ENCODE measurements at regions of chr12 and their contacts with region 1.

Region 1: GRCh38 chr12:48851883-48852733 is at the start of gene DDX23:
- DNase-seq: peak; percentile 89 to 96 (median 92)
- H3K4me3 ChIP-seq: peak within 1 kb of the TSS; percentile 39 to 95
- H3K4me3 Mint-ChIP-seq: peak within 1 kb of the TSS; percentile 91 to 100 (median 98)
- H3K27ac ChIP-seq: peak within 1 kb of the TSS; percentile 91
- H3K27ac Mint-ChIP-seq: peak within 1 kb of the TSS; percentile 92 to 99 (median 99)
- H3K4me1 ChIP-seq: peaks cover 32% of the 10 kb centered on the region
- H3K4me1 Mint-ChIP-seq: peaks cover 28 to 49% (median 40%) of the 10 kb centered on the region in 4 donors
- H3K27me3 ChIP-seq: no peaks in the 10 kb centered on the region
- H3K27me3 Mint-ChIP-seq: no peaks in the 10 kb centered on the region
- total RNA-seq, gene DDX23: 154 to 158 TPM

Region 2: DNA sequence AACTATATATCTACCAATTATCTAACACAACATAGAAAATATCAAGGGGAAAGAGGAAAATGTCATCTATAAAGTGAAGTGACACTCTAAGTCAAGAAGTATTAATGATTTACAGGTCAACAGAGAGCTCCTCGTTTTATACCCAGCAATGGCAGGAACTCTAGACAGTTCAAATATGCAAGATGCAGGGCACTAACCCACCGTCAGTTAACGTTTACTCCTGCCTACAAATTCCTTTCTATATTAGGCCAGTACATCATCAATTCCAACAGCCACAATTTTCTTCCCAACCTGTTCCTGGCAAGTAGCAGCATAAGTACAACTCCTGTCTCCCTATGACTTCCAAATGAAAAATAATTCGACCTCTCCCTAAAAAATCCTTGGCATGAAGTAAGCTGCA is 161.1 kb before region 1 on chr12:
- CTCF ChIA-PET with region 1: no interaction called
- POLR2A ChIA-PET with region 1: no interaction called
- intact Hi-C with region 1: no loop called
- DNase-seq: no peak
- H3K4me3 ChIP-seq: no peak overlapping the region
- H3K4me3 Mint-ChIP-seq: no peak overlapping the region
- H3K27ac ChIP-seq: no peak overlapping the region
- H3K27ac Mint-ChIP-seq: peak overlapping the region in 3 of 7 donors; percentile 17 to 56 (median 53)
- H3K4me1 ChIP-seq: no peaks in the 10 kb centered on the region
- H3K4me1 Mint-ChIP-seq: peaks cover 3 to 5% (median 4%) of the 10 kb centered on the region in 4 donors
- H3K27me3 ChIP-seq: no peaks in the 10 kb centered on the region
- H3K27me3 Mint-ChIP-seq: no peaks in the 10 kb centered on the region

Region 3: DNA sequence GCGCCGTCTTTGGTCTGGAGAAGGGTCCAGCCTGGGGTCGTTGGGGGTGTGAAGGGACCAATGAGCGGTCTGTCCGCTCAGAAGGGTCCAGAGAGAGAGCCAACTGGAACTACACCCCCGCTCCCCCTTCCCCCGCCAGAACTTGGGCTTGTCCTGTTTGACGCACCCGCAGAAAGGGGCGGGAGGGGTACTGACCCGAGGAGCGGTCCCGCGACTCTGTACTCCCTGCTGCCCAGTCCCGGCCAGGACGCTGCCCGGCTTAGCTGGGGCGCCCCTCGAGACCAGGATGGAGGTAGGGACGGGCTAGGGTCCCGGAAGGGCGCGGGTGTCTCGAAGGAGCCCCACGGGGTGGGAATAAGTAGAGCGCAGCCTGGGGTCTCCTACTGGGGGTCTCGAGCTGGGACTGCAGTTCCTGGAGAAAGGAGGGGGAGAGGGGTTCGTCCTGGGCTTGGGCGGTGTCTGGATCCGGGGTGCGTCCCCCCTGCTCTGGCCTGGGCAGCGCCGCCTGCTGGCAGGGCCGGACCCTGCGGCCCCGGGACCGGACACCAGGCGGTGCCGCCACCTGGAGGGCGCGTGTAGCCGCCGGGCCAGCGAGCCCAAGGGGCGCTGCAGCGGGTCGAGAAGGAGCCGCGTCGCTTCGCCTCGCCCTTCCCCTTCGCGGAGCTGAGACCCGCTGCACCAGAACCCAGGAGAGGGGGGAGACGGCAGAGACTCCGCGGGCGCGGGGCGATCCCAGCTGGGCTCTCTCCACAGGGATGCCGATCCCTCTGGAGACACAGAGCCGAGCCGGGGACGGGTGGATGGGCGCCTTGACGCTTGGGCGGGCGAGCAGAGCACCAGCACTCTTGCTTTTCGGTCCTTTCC is 37.6 kb before region 1 on chr12:
- CTCF ChIA-PET with region 1: interaction called, 27 read pairs
- POLR2A ChIA-PET with region 1: interaction called, 33 read pairs
- intact Hi-C with region 1: loop called (anchors 1 kb)
- DNase-seq: peak; percentile 63 to 76 (median 66)
- H3K4me3 ChIP-seq: peak overlapping the region; percentile 87 to 94
- H3K4me3 Mint-ChIP-seq: peak overlapping the region; percentile 86 to 94 (median 92)
- H3K27ac ChIP-seq: peak overlapping the region; percentile 55
- H3K27ac Mint-ChIP-seq: peak overlapping the region in 6 of 7 donors; percentile 48 to 91 (median 78)
- H3K4me1 ChIP-seq: peaks cover 37% of the 10 kb centered on the region
- H3K4me1 Mint-ChIP-seq: peaks cover 20 to 58% (median 31%) of the 10 kb centered on the region in 4 donors
- H3K27me3 ChIP-seq: no peaks in the 10 kb centered on the region
- H3K27me3 Mint-ChIP-seq: no peaks in the 10 kb centered on the region

Region 4: DNA sequence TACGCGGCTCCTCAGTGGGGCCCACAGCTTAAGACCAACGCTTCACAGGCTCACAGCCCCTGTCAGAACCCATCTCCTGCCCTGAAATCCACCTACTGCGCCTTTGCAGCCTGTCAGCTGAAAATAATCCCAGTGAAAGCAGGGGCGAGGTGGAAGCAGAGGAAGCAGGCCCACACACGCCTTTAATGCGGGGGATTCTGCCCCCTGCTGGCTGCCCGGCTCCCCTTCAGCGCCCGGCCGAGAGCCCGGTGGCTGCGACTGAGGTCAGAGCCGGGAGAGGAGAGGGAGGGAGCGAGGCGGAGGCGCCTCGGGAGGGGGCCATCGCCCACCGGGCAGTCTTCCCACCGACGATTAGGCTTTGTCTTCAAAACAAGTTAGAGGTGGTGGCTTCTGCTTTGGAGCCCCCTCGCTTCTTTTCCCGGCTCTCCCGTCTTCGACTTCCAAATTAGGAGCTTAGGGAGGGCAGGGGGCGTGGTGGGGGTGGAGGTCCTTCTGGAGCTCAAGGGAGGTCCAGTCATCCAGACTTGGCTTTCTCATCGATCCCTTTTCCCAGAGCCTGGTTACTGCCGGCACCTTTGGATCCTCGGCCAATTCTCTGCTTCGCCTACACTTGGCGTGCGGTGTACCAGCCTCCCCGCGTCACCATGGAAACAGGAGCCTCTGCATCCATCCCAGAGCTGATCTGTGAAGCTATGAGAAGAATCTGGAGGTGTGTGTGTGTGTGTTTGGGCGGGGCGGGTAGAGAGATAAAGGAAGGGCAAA is 38.7 kb after region 1 on chr12:
- CTCF ChIA-PET with region 1: interaction called, 247 read pairs
- POLR2A ChIA-PET with region 1: interaction called, 30 read pairs
- intact Hi-C with region 1: loop called (anchors 1 kb)
- DNase-seq: peak; percentile 62 to 72 (median 64)
- H3K4me3 ChIP-seq: no peak overlapping the region
- H3K4me3 Mint-ChIP-seq: peak overlapping the region in 2 of 8 donors; percentile 38 to 56
- H3K27ac ChIP-seq: no peak overlapping the region
- H3K27ac Mint-ChIP-seq: peak overlapping the region in 1 of 7 donors; percentile 6
- H3K4me1 ChIP-seq: peaks cover 9% of the 10 kb centered on the region
- H3K4me1 Mint-ChIP-seq: peaks cover 0 to 2% (median 0%) of the 10 kb centered on the region in 4 donors
- H3K27me3 ChIP-seq: peaks cover 11% of the 10 kb centered on the region
- H3K27me3 Mint-ChIP-seq: peaks cover 5 to 11% of the 10 kb centered on the region in 2 donors

Region 5: DNA sequence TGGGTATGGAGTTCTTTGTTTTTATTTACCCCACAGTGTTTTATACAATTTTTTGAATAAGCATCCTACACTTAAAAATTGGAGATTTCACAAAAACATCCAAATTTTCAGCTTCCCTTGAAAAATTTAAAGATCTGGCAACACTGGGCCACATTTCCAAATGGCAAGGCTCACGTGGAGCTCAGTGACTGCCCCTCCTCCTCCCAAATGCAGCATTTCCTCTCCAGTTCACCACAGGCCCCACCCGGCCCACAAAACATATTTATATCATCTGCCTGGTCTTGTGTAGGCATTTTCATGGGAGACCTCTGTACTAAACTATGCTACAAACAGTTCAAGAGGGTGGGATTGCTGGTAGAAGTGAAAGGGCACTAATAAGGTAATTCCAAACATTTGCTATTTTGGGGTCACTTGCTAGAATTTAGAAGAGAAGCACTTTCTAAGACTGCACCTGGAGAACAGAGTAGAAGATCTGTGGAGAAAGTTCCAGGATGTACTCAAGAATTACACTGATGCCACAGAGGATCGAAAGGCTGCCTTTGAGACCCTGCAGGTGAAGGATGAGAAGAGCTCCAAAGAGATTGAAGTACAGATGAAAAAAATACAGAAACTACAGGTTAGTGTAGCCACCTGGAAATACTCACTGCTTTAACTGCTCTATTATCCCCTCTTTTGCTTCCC is 65.9 kb after region 1 on chr12:
- CTCF ChIA-PET with region 1: interaction called, 46 read pairs
- POLR2A ChIA-PET with region 1: interaction called, 26 read pairs
- intact Hi-C with region 1: no loop called
- DNase-seq: peak; percentile 55 to 66 (median 61)
- H3K4me3 ChIP-seq: peak overlapping the region; percentile 44 to 72
- H3K4me3 Mint-ChIP-seq: peak overlapping the region; percentile 91 to 99 (median 94)
- H3K27ac ChIP-seq: peak overlapping the region; percentile 65
- H3K27ac Mint-ChIP-seq: peak overlapping the region; percentile 72 to 97 (median 94)
- H3K4me1 ChIP-seq: peaks cover 50% of the 10 kb centered on the region
- H3K4me1 Mint-ChIP-seq: peaks cover 27 to 54% (median 39%) of the 10 kb centered on the region in 4 donors
- H3K27me3 ChIP-seq: no peaks in the 10 kb centered on the region
- H3K27me3 Mint-ChIP-seq: no peaks in the 10 kb centered on the region

Region 6: DNA sequence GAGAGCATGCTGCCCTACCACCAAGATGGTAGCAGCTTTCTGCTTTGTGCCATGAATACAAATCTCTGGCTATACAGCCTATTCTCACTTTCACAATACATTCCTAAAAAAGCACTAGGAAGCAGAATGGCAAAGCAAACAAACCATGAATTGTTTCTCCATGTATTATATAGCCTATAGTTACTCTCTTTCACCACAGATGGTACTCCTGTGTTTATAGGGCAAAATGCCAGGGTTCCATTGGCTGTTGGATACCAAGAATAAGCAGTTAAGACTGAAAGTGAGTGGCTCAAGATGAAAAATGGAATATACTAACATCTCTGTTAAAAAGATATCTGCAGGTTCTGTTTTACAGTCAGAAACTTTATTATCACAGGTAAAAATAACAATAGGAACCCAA is 94.1 kb after region 1 on chr12:
- CTCF ChIA-PET with region 1: interaction called, 154 read pairs
- POLR2A ChIA-PET with region 1: interaction called, 4 read pairs
- intact Hi-C with region 1: no loop called
- DNase-seq: no peak
- H3K4me3 ChIP-seq: no peak overlapping the region
- H3K4me3 Mint-ChIP-seq: no peak overlapping the region
- H3K27ac ChIP-seq: no peak overlapping the region
- H3K27ac Mint-ChIP-seq: peak overlapping the region in 5 of 7 donors; percentile 10 to 72 (median 61)
- H3K4me1 ChIP-seq: peaks cover 8% of the 10 kb centered on the region
- H3K4me1 Mint-ChIP-seq: peaks cover 20 to 38% (median 31%) of the 10 kb centered on the region in 4 donors
- H3K27me3 ChIP-seq: no peaks in the 10 kb centered on the region
- H3K27me3 Mint-ChIP-seq: no peaks in the 10 kb centered on the region

Region 7: GRCh38 chr12:48988030-48988649 is 136.0 kb after region 1 on chr12:
- CTCF ChIA-PET with region 1: interaction called, 55 read pairs
- POLR2A ChIA-PET with region 1: interaction called, 7 read pairs
- intact Hi-C with region 1: loop called (anchors 1 kb)
- DNase-seq: peak; percentile 64 to 74 (median 67)
- H3K4me3 ChIP-seq: no peak overlapping the region
- H3K4me3 Mint-ChIP-seq: peak overlapping the region in 2 of 8 donors; percentile 7 to 35
- H3K27ac ChIP-seq: no peak overlapping the region
- H3K27ac Mint-ChIP-seq: peak overlapping the region in 3 of 7 donors; percentile 21 to 65 (median 45)
- H3K4me1 ChIP-seq: peaks cover 6% of the 10 kb centered on the region
- H3K4me1 Mint-ChIP-seq: peaks cover 10 to 15% (median 11%) of the 10 kb centered on the region in 4 donors
- H3K27me3 ChIP-seq: peaks cover 4% of the 10 kb centered on the region
- H3K27me3 Mint-ChIP-seq: peaks cover 21 to 22% of the 10 kb centered on the region in 2 donors

Region 8: GRCh38 chr12:49130151-49131050 is 278.3 kb after region 1 on chr12:
- CTCF ChIA-PET with region 1: no interaction called
- POLR2A ChIA-PET with region 1: interaction called, 11 read pairs
- intact Hi-C with region 1: no loop called
- DNase-seq: peak; percentile 93 to 95 (median 94)
- H3K4me3 ChIP-seq: peak overlapping the region; percentile 94 to 97
- H3K4me3 Mint-ChIP-seq: peak overlapping the region; percentile 97 to 99 (median 98)
- H3K27ac ChIP-seq: peak overlapping the region; percentile 94
- H3K27ac Mint-ChIP-seq: peak overlapping the region; percentile 98 to 99 (median 99)
- H3K4me1 ChIP-seq: peaks cover 42% of the 10 kb centered on the region
- H3K4me1 Mint-ChIP-seq: peaks cover 24 to 63% (median 36%) of the 10 kb centered on the region in 4 donors
- H3K27me3 ChIP-seq: no peaks in the 10 kb centered on the region
- H3K27me3 Mint-ChIP-seq: no peaks in the 10 kb centered on the region